ENCODE measurements at regions of chr3 and their contacts with region 1.

Region 1: GRCh38 chr3:129233538-129233937 is 15.9 kb upstream of the COPG1 start:
- DNase-seq: no peak
- ATAC-seq: no peak
- H3K4me3 Mint-ChIP-seq: no peak overlapping the region
- H3K27ac Mint-ChIP-seq: no peak overlapping the region
- H3K4me1 Mint-ChIP-seq: peaks cover 13% of the 10 kb centered on the region
- H3K27me3 Mint-ChIP-seq: no peaks in the 10 kb centered on the region

Region 2: DNA sequence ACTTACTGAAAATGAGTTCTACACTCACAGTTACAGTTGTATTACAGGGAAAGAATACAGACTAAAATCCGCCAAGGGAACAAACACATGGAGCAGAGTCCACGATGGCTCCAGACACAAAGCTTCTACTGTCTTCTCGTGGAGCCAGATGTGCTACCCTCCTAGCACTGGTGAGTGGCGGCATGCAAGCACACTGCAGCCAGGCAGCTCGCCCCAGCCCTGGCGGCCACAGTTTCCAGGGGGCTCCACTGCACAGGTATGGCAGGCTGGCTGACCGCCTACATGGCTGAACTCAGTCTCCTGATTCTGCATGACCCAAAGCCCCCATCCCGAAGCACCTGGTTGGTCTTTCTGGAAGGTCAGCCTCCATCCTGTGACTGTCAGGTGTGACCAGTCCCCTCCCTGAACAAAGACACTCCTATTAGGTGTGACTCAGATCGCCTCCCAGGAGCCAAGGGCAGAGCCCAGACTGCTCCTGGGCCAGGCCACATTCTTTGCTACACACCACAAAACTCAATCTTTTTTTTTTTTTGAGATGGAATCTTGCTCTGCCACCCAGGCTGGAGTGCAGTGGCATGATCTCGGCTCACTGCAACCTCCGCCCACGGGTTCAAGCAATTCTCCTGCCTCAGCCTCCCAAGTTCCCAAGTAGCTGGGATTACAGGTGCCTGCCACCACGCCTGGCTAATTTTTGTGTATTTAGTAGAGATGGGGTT is 291.2 kb before region 1 on chr3:
- CTCF ChIA-PET with region 1: no interaction called
- POLR2A ChIA-PET with region 1: no interaction called
- intact Hi-C with region 1: no loop called
- DNase-seq: no peak
- ATAC-seq: no peak
- H3K4me3 Mint-ChIP-seq: no peak overlapping the region
- H3K27ac Mint-ChIP-seq: no peak overlapping the region
- H3K4me1 Mint-ChIP-seq: no peaks in the 10 kb centered on the region
- H3K27me3 Mint-ChIP-seq: no peaks in the 10 kb centered on the region

Region 3: GRCh38 chr3:129035360-129036221 is 197.9 kb before region 1 on chr3:
- CTCF ChIA-PET with region 1: no interaction called
- POLR2A ChIA-PET with region 1: interaction called, 12 read pairs
- intact Hi-C with region 1: no loop called
- DNase-seq: no peak
- ATAC-seq: no peak
- H3K4me3 Mint-ChIP-seq: no peak overlapping the region
- H3K27ac Mint-ChIP-seq: no peak overlapping the region
- H3K4me1 Mint-ChIP-seq: peaks cover 14% of the 10 kb centered on the region
- H3K27me3 Mint-ChIP-seq: peaks cover 3% of the 10 kb centered on the region

Region 4: GRCh38 chr3:129211772-129212171 is 21.8 kb before region 1 on chr3:
- CTCF ChIA-PET with region 1: no interaction called
- POLR2A ChIA-PET with region 1: no interaction called
- intact Hi-C with region 1: no loop called
- DNase-seq: no peak
- ATAC-seq: no peak
- H3K4me3 Mint-ChIP-seq: no peak overlapping the region
- H3K27ac Mint-ChIP-seq: no peak overlapping the region
- H3K4me1 Mint-ChIP-seq: no peaks in the 10 kb centered on the region
- H3K27me3 Mint-ChIP-seq: no peaks in the 10 kb centered on the region